Panc1 (cell line): ENCODE measurements at regions of chr5 and their contacts with region 1.

Region 1: GRCh38 chr5:43396762-43397304 is 15.4 kb downstream of the CCL28 start:
- DNase-seq: no peak
- ATAC-seq: peak; percentile 93
- H3K4me3 ChIP-seq: peak overlapping the region; percentile 47 to 48
- H3K27ac ChIP-seq: peak overlapping the region; percentile 58
- H3K4me1 ChIP-seq: no peaks in the 10 kb centered on the region
- H3K27me3 ChIP-seq: no peaks in the 10 kb centered on the region
- CTCF ChIP-seq: no peak

Region 2: GRCh38 chr5:43190755-43191603 is 205.9 kb before region 1 on chr5:
- CTCF ChIA-PET with region 1: no interaction called
- POLR2A ChIA-PET with region 1: interaction called, 15 read pairs
- in situ Hi-C with region 1: no loop called
- intact Hi-C with region 1: no loop called
- DNase-seq: no peak
- ATAC-seq: no peak
- H3K4me3 ChIP-seq: peak overlapping the region; percentile 51 to 61; a peak in 2 of 4 replicates
- H3K27ac ChIP-seq: no peak overlapping the region
- H3K4me1 ChIP-seq: peaks cover 14% of the 10 kb centered on the region
- H3K27me3 ChIP-seq: peaks cover 7% of the 10 kb centered on the region; the same call in 1 of the 2 replicates
- CTCF ChIP-seq: no peak

Region 3: DNA sequence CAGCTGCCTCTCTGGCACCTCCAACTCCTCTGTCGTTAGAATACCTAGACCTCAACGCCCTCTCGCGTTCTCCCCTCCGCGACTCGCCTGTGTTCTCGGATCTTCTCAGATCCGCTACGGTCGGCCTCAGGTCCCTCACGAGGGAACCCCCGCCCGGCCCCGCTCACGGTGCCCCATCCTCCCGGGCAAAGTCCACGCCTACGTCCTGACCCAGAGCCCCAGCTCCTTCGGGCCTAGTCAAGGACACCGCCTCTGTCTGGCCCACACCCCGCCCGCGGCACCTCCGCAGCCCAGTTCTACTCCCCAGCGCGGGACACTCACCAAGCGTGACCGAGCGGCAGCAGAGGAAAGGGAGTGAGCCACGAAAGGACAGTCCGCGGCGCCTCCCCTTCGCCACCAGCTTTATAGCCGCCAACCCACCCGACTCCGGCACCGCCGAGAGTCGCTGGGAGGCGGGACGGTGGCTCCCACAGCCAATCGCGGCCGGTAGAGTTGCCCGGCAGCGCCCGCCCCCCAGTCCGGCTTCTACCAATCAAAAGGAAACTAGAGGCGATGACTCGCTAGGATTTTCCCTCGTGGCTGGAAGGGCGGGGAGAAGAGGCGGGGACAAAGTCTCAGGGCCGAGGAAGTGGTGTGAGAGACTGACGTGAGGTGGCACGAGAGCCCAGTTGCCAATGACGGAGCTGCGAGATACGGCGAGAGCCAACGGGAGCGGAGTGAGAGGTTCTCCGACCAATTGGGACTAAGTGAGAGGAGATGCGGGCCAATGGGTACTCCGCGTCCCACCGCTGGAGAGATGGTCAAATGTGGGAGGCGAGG is 83.6 kb before region 1 on chr5 and contains the start of gene HMGCS1:
- CTCF ChIA-PET with region 1: interaction called, 10 read pairs
- POLR2A ChIA-PET with region 1: no interaction called
- in situ Hi-C with region 1: no loop called
- intact Hi-C with region 1: no loop called
- DNase-seq: peak; percentile 99
- ATAC-seq: peak; percentile 98
- H3K4me3 ChIP-seq: peak within 1 kb of the TSS; percentile 79 to 85
- H3K27ac ChIP-seq: peak within 1 kb of the TSS; percentile 98
- H3K4me1 ChIP-seq: peaks cover 14% of the 10 kb centered on the region
- H3K27me3 ChIP-seq: no peaks in the 10 kb centered on the region
- CTCF ChIP-seq: no peak
- total RNA-seq, gene HMGCS1: 66.1 TPM

Region 4: DNA sequence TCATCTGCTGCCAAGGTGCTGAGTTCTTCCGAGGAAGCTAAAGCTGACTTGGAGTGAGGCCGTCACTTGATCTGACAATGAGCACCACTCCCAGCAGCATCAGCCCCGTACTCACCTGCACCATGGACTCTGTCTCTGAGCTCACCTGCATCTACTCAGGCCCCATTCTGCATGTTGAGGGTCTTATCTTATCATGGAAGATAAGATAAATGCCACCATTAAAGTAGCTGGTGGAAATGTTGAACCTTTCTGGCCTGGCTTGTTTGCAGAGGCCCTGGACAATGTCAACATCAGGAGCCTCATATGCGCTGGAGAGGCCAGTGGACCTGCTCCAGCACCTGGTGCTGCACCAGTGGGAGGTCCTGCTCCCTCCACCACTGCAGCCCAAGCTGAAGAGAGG is 48.6 kb before region 1 on chr5:
- CTCF ChIA-PET with region 1: no interaction called
- POLR2A ChIA-PET with region 1: no interaction called
- in situ Hi-C with region 1: no loop called
- intact Hi-C with region 1: no loop called
- DNase-seq: no peak
- ATAC-seq: no peak
- H3K4me3 ChIP-seq: no peak overlapping the region
- H3K27ac ChIP-seq: no peak overlapping the region
- H3K4me1 ChIP-seq: no peaks in the 10 kb centered on the region
- H3K27me3 ChIP-seq: peaks cover 8% of the 10 kb centered on the region; the same call in 1 of the 2 replicates
- CTCF ChIP-seq: no peak

Region 5: GRCh38 chr5:43661102-43661501 is 264.3 kb after region 1 on chr5:
- CTCF ChIA-PET with region 1: no interaction called
- POLR2A ChIA-PET with region 1: no interaction called
- in situ Hi-C with region 1: no loop called
- intact Hi-C with region 1: no loop called
- DNase-seq: peak; percentile 8
- ATAC-seq: no peak
- H3K4me3 ChIP-seq: no peak overlapping the region
- H3K27ac ChIP-seq: no peak overlapping the region
- H3K4me1 ChIP-seq: no peaks in the 10 kb centered on the region
- H3K27me3 ChIP-seq: no peaks in the 10 kb centered on the region
- CTCF ChIP-seq: peak; percentile 49; the same call in 1 of the 2 replicates